Activated T-helper 1 cell treated with anti-CD3 and anti-CD28 coated beads, Interleukin-12 subunit alpha, Interleukin-12 subunit beta, Interleukin-2, Interleukin-4 antibody, amounts not matched to agents 30 ng/mL and 10 ng/mL and 1 ng/mL, durations not matched to agents 14 hours and 24 hours and 36 hours (primary cell): ENCODE measurements at regions of chr7 and their contacts with region 1.

Region 1: DNA sequence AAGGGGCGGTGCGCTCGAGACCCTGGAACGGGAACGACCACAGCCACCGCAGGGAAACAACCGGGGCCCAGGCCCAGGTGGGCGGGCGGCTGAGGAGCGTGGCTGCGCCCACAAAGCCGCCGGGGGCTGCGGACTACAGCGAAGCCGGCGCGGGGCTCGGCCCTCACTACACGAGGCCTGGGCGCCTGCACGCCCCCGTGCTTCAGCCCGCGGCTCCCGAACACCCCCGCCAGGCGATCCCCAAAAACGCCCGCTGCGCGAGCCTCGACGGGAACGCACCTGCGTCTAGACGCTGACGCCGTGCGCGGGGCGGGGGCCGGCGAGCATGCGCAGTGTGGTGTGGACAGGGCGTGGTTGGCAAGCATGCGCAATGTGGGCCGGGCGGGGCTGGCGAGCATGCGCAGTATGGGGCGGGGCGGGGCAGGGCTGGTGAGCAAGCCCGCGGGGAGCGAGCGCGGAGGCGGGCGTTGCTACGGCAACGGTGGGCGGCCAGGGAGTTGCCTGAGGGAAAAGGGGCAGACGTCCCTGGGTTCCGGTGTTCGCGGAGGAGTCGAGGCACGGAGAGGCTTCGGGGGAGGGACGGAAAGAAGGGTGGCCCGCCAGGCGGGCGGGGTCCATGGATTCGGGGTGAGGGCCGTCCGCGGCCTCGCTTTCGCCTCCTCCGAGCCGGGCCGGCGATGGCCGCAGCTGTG is at the start of gene RNF32:
- DNase-seq: peak; percentile 95
- H3K4me3 Mint-ChIP-seq: peak within 1 kb of the TSS; percentile 93
- H3K27ac Mint-ChIP-seq: peak within 1 kb of the TSS; percentile 99
- H3K4me1 Mint-ChIP-seq: peaks cover 53% of the 10 kb centered on the region
- H3K27me3 Mint-ChIP-seq: peaks cover 6% of the 10 kb centered on the region
- total RNA-seq, gene RNF32: 2.1 and 2.2 TPM in 2 replicates

Region 2: GRCh38 chr7:155815332-155816191 is 824.8 kb before region 1 on chr7:
- intact Hi-C with region 1: loop called (anchors 10 kb)
- DNase-seq: peak; percentile 66
- H3K4me3 Mint-ChIP-seq: no peak overlapping the region
- H3K27ac Mint-ChIP-seq: peak overlapping the region; percentile 67
- H3K4me1 Mint-ChIP-seq: peaks cover 21% of the 10 kb centered on the region
- H3K27me3 Mint-ChIP-seq: peaks cover 47% of the 10 kb centered on the region

Region 3: GRCh38 chr7:156625580-156625979 is 14.8 kb before region 1 on chr7:
- intact Hi-C with region 1: loop called (anchors 2 kb)
- DNase-seq: peak; percentile 35
- H3K4me3 Mint-ChIP-seq: no peak overlapping the region
- H3K27ac Mint-ChIP-seq: peak overlapping the region; percentile 70
- H3K4me1 Mint-ChIP-seq: peaks cover 17% of the 10 kb centered on the region
- H3K27me3 Mint-ChIP-seq: peaks cover 16% of the 10 kb centered on the region

Region 4: DNA sequence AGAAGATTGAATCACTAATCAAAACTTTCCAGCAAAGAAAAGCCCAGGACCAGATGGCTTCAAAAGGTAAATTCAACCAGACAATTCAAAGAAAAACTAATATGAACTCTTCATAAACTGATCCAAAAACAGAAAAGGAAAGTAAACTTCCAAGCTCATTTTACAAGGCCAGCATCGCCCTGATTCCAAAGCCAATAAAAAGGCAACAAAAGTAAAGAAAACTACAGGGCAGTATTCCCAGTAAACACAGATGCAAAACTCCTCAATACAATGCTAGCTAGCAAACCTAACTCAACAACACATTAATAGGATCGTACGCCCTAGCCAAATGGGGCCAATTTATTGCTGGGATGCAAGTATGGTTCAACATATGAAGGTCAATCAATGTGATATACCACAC is 53.2 kb after region 1 on chr7:
- intact Hi-C with region 1: no loop called
- DNase-seq: no peak
- H3K4me3 Mint-ChIP-seq: no peak overlapping the region
- H3K27ac Mint-ChIP-seq: no peak overlapping the region
- H3K4me1 Mint-ChIP-seq: peaks cover 6% of the 10 kb centered on the region
- H3K27me3 Mint-ChIP-seq: no peaks in the 10 kb centered on the region

Region 5: DNA sequence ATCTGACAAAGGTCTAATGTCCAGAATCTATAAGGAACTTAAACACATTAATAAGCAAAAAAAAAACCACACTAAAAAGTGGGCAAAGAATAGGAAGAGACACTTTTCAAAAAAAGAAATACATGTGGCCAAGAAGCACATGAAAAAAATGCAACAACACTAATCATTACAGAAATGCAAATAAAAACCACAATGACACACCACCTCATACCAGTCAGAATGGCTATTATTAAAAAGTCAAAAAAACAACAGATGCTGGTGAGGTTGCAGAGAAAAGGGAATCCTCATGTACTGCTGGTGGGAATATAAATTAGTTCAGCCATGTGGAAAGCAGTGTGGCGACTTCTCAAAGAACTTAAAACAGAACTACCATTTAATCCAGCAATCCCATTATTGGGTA is 133.6 kb after region 1 on chr7:
- intact Hi-C with region 1: loop called (anchors 1 kb)
- DNase-seq: no peak
- H3K4me3 Mint-ChIP-seq: no peak overlapping the region
- H3K27ac Mint-ChIP-seq: no peak overlapping the region
- H3K4me1 Mint-ChIP-seq: peaks cover 53% of the 10 kb centered on the region
- H3K27me3 Mint-ChIP-seq: no peaks in the 10 kb centered on the region

Region 6: DNA sequence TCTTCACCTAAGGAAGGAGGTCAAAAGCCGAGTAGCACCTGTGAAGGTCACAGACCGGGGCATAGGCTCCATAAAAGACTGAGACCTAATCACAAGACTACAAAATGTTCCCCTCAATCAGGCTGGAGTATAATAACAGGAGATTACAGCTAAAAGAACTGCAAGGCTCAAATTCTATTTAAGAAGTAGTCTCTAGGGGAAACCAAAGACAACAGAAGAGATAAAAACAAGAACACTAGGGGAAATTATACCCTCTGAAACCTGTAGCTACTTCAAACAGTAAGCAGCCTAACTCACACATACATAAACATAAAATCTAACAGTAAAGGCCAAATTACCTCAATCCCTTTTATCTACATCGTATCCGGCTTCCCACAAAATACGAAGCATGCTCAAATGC is 214.3 kb after region 1 on chr7:
- intact Hi-C with region 1: no loop called
- DNase-seq: no peak
- H3K4me3 Mint-ChIP-seq: no peak overlapping the region
- H3K27ac Mint-ChIP-seq: no peak overlapping the region
- H3K4me1 Mint-ChIP-seq: peaks cover 5% of the 10 kb centered on the region
- H3K27me3 Mint-ChIP-seq: no peaks in the 10 kb centered on the region

Region 7: DNA sequence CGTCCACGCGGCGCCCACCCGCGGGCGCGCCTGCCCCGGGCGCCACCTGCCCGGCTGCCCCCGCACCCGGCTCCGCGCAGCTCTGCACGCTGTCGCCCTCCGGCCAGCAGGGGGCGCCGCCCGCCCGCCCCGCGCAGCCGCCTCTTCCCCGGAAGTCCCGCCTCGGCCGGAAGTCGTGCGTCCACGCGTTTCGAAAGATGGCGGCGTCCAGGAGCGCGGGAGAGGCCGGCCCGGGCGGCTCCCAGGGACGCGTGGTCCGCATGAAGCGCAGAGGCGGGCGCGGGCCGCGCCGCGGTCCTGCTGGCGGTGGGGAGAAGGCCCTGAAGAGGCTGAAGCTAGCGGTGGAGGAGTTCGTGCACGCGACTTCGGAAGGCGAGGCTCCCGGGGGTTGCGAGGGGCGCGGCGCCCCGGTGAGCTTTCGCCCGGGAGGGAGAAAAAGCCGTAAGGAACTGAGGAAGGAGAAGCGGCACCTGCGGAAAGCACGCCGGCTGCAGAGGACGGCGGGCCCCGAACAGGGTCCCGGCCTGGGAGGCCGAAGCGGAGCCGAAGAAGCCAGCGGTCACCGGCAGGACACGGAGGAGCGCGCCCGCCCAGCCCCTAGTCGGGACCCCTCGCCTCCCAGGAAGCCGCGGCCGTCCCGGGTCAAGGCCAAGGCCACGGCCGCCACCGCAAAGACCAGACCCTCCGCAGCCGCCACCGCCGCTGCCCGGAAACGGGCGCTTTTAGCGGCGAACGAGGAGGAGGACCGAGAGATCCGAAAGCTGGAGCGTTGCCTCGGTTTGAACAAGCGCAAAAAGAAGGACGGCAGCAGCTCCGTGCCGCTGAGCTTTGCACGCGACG is 309.4 kb after region 1 on chr7 and contains the start of gene NOM1:
- intact Hi-C with region 1: loop called (anchors 2 kb)
- DNase-seq: peak; percentile 86
- H3K4me3 Mint-ChIP-seq: peak within 1 kb of the TSS; percentile 97
- H3K27ac Mint-ChIP-seq: peak within 1 kb of the TSS; percentile 97
- H3K4me1 Mint-ChIP-seq: peaks cover 15% of the 10 kb centered on the region
- H3K27me3 Mint-ChIP-seq: peaks cover 2% of the 10 kb centered on the region
- total RNA-seq, gene NOM1: 46.4 and 50.9 TPM in 2 replicates

Region 8: GRCh38 chr7:157336383-157337315 is 696.2 kb after region 1 on chr7 and contains the start of gene DNAJB6:
- intact Hi-C with region 1: loop called (anchors 2 kb)
- DNase-seq: peak; percentile 94
- H3K4me3 Mint-ChIP-seq: peak within 1 kb of the TSS; percentile 96
- H3K27ac Mint-ChIP-seq: peak within 1 kb of the TSS; percentile 100
- H3K4me1 Mint-ChIP-seq: peaks cover 31% of the 10 kb centered on the region
- H3K27me3 Mint-ChIP-seq: peaks cover 27% of the 10 kb centered on the region
- total RNA-seq, gene DNAJB6: 127 and 137 TPM in 2 replicates